ENCODE measurements at regions of chr7 and their contacts with region 1.

Region 1: DNA sequence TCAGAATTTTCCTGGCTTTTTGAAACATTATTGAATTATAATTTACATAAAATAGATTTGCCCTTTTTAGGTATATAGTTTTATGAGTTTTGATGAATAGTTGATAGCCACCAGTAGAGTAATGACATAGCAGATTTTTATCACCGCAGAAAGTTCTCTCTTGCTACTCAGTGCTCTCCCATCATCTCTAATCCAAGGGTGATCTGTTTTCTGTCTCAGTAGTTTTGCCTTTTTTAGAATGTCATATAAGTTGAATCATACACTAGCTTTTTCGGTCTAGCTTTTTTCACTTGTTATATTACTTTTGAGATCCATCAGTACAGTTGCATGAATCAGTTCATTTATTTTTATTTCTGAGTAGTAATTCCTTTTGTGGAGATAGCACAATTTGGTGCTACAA is 17.9 kb downstream of the RSBN1L start:
- DNase-seq: no peak
- ATAC-seq: peak; percentile 63
- H3K4me3 Mint-ChIP-seq: no peak overlapping the region
- H3K27ac Mint-ChIP-seq: no peak overlapping the region
- H3K4me1 Mint-ChIP-seq: peaks cover 55% of the 10 kb centered on the region
- H3K27me3 Mint-ChIP-seq: no peaks in the 10 kb centered on the region

Region 2: DNA sequence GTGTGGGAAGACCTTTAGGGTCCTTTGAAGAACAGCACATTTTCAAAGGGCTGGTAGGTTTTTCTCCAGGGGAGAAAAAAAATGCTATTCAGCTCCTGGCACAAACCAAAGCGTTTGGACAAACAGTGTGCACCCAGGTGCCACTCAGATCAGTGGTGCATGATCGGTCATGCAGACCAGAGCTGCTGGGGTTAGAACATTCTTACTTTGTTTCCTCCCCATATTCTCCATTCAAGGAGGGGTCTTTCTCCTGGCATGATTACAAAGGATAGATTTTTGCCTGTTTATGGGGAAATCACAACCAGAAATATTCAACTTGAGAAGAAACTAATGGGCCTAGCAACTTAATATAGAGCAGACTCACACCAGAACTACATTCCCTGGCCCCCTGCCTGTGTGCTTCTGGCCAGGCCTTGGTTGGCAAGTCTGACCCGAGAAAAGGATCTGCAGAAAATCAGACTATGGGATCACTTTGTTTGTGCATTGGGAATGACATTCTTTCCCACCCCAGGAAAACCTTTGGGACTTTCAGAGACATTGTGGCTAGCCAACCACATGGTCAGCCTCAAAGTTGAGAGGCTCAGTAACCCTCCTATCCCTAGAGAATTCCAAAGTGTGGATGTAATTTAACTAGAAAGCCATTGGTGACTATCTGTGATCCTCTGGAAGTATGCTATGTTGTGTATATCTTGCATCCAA is 432.3 kb before region 1 on chr7:
- CTCF ChIA-PET with region 1: no interaction called
- POLR2A ChIA-PET with region 1: no interaction called
- intact Hi-C with region 1: no loop called
- DNase-seq: no peak
- ATAC-seq: no peak
- H3K4me3 Mint-ChIP-seq: no peak overlapping the region
- H3K27ac Mint-ChIP-seq: no peak overlapping the region
- H3K4me1 Mint-ChIP-seq: no peaks in the 10 kb centered on the region
- H3K27me3 Mint-ChIP-seq: no peaks in the 10 kb centered on the region

Region 3: GRCh38 chr7:77360104-77360503 is 354.1 kb before region 1 on chr7:
- CTCF ChIA-PET with region 1: no interaction called
- POLR2A ChIA-PET with region 1: no interaction called
- intact Hi-C with region 1: no loop called
- DNase-seq: no peak
- ATAC-seq: no peak
- H3K4me3 Mint-ChIP-seq: no peak overlapping the region
- H3K27ac Mint-ChIP-seq: no peak overlapping the region
- H3K4me1 Mint-ChIP-seq: peaks cover 4% of the 10 kb centered on the region
- H3K27me3 Mint-ChIP-seq: no peaks in the 10 kb centered on the region

Region 4: DNA sequence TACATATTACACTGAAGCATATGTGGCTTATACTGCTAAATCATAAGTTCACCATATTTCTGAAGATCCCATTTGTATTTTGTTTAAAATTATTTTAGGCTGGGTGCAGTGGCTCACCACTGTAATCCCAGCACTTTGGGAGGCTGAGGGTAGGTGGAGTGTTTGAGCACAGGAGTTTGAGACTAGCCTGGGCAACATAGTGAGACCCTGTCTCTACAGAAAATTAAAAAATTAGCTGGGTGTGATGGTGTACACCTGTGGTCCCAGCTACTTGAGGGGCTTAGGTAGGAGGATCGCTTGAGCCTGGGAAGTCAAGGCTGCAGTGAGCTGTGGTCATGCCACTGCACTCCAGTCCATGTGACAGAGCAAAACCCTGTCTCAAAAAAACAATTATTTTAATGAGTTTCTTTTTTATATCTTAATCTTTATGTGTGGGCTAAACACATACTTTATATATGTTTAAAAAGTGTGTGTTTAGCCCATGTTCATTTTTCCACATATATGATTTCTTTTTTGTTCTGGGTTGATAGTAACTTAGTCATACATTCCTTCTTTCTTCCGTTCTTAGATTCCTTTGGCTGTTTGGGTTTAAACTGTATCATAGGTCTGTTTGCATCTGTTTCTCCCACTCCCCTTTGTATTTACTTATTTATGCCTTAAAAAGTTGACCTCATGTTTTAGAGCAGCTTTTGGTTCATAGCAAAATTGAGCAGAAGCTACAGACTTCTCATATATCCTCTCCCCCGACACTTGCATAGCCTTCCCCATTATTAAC is 15.6 kb after region 1 on chr7:
- CTCF ChIA-PET with region 1: interaction called, 14 read pairs
- POLR2A ChIA-PET with region 1: no interaction called
- intact Hi-C with region 1: no loop called
- DNase-seq: no peak
- ATAC-seq: no peak
- H3K4me3 Mint-ChIP-seq: no peak overlapping the region
- H3K27ac Mint-ChIP-seq: no peak overlapping the region
- H3K4me1 Mint-ChIP-seq: peaks cover 50% of the 10 kb centered on the region
- H3K27me3 Mint-ChIP-seq: no peaks in the 10 kb centered on the region